Dendritic cell treated with granulocyte-macrophage colony-stimulating factor and Interleukin-4, amounts not matched to agents 40 ng/mL and 50 ng/mL, for 4 days (primary cell): ENCODE measurements at regions of chr20 and their contacts with region 1.

Region 1: GRCh38 chr20:3753098-3753980 is 14.2 kb downstream of the ADISSP start:
- H3K4me3 Mint-ChIP-seq: no peak overlapping the region
- H3K27ac Mint-ChIP-seq: no peak overlapping the region
- H3K4me1 Mint-ChIP-seq: peaks cover 42% of the 10 kb centered on the region
- H3K27me3 Mint-ChIP-seq: peaks cover 11% of the 10 kb centered on the region

Region 2: DNA sequence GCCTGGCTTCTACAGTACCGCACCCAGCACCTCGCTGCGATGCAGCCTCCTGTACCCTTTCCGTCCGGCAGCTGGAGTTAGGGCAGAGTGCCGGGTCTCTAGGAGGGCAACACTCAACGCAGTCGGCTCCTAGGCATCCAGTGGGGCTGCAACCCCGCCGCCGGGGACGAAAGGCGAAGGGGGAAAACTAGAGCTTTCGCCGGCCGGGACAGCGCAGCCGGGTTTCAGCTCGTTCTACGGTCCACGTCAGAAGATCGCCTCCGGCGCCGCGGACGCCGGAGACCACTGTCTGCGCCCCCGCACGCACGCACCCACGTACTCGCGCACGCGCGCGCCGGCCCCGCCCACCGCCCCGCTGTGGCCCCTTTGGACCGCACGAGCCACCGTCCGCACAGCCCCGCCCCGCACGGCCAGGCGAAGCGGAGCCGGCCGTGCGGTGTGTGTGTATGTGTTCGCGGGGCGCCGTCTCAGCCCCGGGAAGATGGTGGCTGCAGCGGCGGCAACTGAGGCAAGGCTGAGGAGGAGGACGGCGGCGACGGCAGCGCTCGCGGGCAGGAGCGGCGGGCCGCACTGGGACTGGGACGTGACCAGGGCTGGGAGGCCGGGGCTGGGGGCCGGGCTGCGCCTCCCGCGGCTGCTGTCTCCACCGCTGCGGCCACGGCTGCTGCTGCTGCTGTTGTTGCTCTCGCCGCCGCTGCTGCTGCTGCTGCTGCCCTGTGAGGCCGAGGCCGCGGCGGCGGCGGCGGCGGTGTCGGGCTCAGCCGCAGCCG is 282.5 kb before region 1 on chr20 and contains the start of gene ATRN:
- intact Hi-C with region 1: no loop called
- H3K4me3 Mint-ChIP-seq: peak within 1 kb of the TSS; percentile 99
- H3K27ac Mint-ChIP-seq: peak within 1 kb of the TSS; percentile 90
- H3K4me1 Mint-ChIP-seq: peaks cover 38% of the 10 kb centered on the region
- H3K27me3 Mint-ChIP-seq: peaks cover 3% of the 10 kb centered on the region

Region 3: GRCh38 chr20:3679749-3680700 is 73.3 kb before region 1 on chr20:
- intact Hi-C with region 1: loop called (anchors 2 kb)
- H3K4me3 Mint-ChIP-seq: no peak overlapping the region
- H3K27ac Mint-ChIP-seq: peak overlapping the region; percentile 0
- H3K4me1 Mint-ChIP-seq: peaks cover 14% of the 10 kb centered on the region
- H3K27me3 Mint-ChIP-seq: peaks cover 88% of the 10 kb centered on the region

Region 4: DNA sequence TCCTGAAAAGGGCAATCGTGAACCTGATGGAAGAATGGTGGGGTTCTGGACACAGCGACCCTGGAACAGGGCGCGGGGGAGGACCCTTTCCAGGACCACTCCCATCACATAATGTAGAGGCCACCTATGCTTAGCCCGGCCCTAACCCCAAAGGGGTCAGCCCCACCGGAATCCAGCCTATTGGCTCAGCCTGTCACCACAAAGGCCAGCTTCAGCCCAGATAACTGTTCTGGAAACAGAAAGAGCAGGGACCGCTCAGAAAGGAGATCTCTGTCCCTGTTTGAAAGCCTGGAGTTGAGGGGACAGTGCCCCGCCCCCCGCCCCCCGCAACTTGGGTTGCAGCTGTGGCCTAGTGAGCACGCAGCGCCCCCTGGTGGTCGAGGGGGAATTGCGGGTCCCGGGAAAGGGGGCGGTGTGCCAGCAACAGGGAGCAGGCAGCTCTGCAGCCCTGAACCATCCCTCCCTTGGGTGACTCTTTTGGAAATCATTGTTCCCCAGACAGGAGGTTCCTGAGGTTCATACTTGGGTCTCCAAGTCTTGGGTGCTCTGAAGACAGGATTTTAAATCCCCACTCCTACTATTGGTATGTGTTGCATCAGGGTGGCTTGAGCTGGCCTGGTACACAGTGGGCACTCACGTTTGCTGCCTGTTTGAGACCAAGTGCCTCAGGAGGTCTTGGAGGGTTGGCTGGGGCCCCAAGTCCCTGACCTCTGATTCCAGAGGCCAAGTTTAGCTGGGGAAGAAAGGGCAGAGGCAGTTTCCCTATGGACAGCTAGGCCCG is 42.4 kb before region 1 on chr20:
- intact Hi-C with region 1: loop called (anchors 2 kb)
- H3K4me3 Mint-ChIP-seq: peak overlapping the region; percentile 92
- H3K27ac Mint-ChIP-seq: peak overlapping the region; percentile 80
- H3K4me1 Mint-ChIP-seq: peaks cover 80% of the 10 kb centered on the region
- H3K27me3 Mint-ChIP-seq: peaks cover under 1% of the 10 kb centered on the region

Region 5: GRCh38 chr20:3767427-3768341 is 14.3 kb after region 1 on chr20 and contains the start of gene ADISSP:
- intact Hi-C with region 1: loop called (anchors 1 kb)
- H3K4me3 Mint-ChIP-seq: peak within 1 kb of the TSS; percentile 91
- H3K27ac Mint-ChIP-seq: peak within 1 kb of the TSS; percentile 89
- H3K4me1 Mint-ChIP-seq: peaks cover 60% of the 10 kb centered on the region
- H3K27me3 Mint-ChIP-seq: no peaks in the 10 kb centered on the region

Region 6: DNA sequence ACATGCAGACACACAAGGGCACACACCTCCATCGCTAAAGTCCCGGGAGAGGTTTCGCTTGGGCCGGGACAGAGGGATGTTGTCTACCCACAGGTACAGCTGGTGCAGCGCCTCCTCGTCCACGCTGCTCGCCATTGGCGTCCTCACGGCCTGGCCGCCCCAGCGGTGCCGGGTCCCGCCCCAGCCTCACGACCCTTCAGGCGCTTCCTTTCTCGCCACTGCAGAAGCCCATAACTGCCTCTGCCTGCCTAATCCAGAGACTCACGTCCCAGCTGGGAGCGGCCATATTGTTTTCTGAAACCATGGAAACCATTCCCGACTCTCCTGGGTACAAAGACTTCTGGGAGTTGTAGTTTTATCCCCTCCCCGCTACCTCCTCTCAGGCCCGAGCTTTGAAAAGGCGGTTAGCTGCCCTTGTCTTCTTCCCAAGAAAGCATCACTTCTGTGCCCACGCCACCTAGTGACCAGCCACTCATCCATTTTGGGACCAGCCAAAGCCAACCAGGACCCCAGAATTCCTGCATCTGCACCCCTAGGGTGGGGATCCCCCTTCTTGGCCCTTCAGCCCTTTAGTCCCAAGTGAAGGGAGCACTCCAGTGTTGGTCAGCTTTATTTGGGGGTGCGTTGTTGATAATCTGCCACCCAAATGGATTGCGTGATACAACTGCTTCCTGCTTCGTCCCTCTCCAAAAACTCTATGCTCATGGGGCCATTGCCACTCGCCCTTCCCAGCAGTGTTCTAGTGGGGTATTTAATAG is 28.0 kb after region 1 on chr20 and contains the start of gene SPEF1:
- intact Hi-C with region 1: loop called (anchors 1 kb)
- H3K4me3 Mint-ChIP-seq: peak within 1 kb of the TSS; percentile 61
- H3K27ac Mint-ChIP-seq: peak within 1 kb of the TSS; percentile 51
- H3K4me1 Mint-ChIP-seq: peaks cover 82% of the 10 kb centered on the region
- H3K27me3 Mint-ChIP-seq: peaks cover 22% of the 10 kb centered on the region